ENCODE measurements at regions of chr7 and their contacts with region 1.

Region 1: GRCh38 chr7:26365077-26365900 is 73.6 kb downstream of the SNX10 start:
- DNase-seq: peak; percentile 83
- ATAC-seq: peak; percentile 96
- H3K4me3 ChIP-seq: no peak overlapping the region
- H3K27ac ChIP-seq: peak overlapping the region; percentile 48; the same call in 1 of the 2 replicates
- H3K4me1 ChIP-seq: peaks cover 11% of the 10 kb centered on the region
- H3K27me3 ChIP-seq: no peaks in the 10 kb centered on the region
- CTCF ChIP-seq: peak; percentile 62 to 94 (median 64); a peak in 5 of 6 replicates
- EP300 ChIP-seq: no peak
- POLR2A ChIP-seq: no peak
- RAD21 ChIP-seq: peak; percentile 98

Region 2: DNA sequence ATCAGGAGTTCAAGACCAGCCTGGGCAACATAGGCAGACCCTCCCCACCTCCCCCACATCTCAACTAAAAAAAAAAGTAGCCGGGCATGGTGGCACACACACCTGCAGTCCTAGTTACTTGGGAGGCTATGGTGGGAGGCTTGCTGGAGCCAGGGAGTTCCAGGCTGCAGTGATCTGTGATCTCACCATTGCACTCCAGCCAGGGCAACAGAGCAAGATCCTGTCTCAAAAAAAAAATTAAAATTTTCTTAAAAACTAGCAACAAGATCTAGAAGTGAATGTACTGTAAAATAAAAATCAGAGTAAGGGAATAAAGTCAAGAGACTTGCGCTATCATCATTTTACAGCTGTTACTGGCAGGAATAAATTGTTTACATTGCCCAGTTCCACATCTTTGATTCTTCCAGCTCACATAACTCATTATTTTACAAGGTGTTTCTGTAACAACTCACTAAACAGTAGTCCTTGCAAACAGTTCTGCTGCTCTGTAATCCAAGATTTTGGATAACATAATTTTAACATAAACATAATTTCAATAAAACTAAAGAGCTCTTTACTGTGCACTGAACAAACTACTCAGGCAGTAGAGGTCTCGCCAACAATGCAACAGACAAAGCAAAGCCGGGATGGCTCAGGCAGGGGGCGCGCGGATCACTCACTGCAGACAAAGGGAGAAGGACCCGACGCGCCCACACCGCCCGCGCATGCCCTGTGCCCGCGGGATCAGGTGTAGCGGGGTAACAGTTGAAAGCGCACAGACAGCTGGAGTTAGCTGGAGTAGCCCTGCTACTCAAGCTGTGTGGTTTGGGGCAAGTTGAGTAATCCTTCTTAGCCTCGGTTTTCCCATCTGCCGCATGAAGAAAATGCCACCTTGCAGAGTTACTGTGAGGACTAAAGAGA is 286.6 kb before region 1 on chr7:
- CTCF ChIA-PET with region 1: interaction called, 17 read pairs
- POLR2A ChIA-PET with region 1: no interaction called
- RAD21 ChIA-PET with region 1: interaction called, 5 read pairs
- SMC1A ChIA-PET with region 1: interaction called, 10 read pairs
- in situ Hi-C with region 1: no loop called
- intact Hi-C with region 1: loop called (anchors 5 kb)
- DNase-seq: peak; percentile 36
- ATAC-seq: peak; percentile 98
- H3K4me3 ChIP-seq: no peak overlapping the region
- H3K27ac ChIP-seq: no peak overlapping the region
- H3K4me1 ChIP-seq: no peaks in the 10 kb centered on the region
- H3K27me3 ChIP-seq: peaks cover 2 to 5% of the 10 kb centered on the region in 2 experiments; a peak in 1 of 4 replicates
- CTCF ChIP-seq: peak; percentile 50 to 61 (median 53); a peak in 5 of 6 replicates
- EP300 ChIP-seq: no peak
- POLR2A ChIP-seq: no peak
- RAD21 ChIP-seq: peak; percentile 60

Region 3: DNA sequence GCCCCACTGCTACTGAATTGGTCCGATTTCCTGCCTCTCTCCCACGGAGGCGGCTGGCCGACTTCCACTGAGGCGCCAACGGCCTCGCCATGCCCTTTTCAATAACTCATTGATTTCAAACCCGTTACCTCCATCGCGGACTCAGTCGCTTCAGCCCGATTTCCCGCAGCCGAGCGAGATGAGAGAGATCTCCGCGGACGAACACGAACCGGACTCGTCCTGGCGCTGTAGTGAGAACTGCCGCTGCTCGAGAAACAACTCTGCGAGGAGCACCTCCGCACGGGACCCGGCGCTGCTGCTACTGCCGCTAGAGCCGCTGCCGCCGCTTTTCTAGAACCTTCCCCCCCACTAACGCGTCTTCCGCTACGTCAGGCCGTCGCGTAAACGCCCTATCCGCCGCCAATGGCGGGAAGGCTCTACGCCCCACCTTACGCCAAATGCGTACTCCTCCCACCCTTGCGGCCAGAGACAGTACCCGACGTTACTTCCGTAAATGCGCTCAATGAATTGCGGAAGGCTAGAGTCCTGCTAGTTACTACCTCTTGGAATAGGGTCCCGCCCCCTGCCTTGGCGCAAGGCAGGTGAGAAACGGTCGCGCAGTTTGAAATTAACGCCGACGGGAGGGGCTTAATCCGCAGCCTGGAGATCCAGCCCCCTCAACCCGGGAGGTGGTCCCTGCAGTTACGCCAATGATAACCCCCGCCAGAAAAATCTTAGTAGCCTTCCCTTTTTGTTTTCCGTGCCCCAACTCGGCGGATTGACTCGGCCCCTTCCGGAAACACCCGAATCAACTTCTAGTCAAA is 164.6 kb before region 1 on chr7 and contains the start of gene HNRNPA2B1:
- CTCF ChIA-PET with region 1: interaction called, 24 read pairs
- POLR2A ChIA-PET with region 1: interaction called, 3 read pairs
- RAD21 ChIA-PET with region 1: interaction called, 15 read pairs
- SMC1A ChIA-PET with region 1: interaction called, 28 read pairs
- in situ Hi-C with region 1: loop called (anchors 10 kb)
- intact Hi-C with region 1: loop called (anchors 2 kb)
- DNase-seq: peak; percentile 98
- ATAC-seq: peak; percentile 75
- H3K4me3 ChIP-seq: peak within 1 kb of the TSS; percentile 98
- H3K27ac ChIP-seq: peak within 1 kb of the TSS; percentile 96
- H3K4me1 ChIP-seq: 0 out of 2 replicates have a peak, but pooled peaks cover 3% of the 10 kb centered on the region
- H3K27me3 ChIP-seq: no peaks in the 10 kb centered on the region
- CTCF ChIP-seq: no peak
- EP300 ChIP-seq: no peak
- POLR2A ChIP-seq: peak; percentile 100
- RAD21 ChIP-seq: no peak
- polyA plus RNA-seq, gene HNRNPA2B1: 726 to 1,124 TPM

Region 4: GRCh38 chr7:26318921-26319320 is 46.4 kb before region 1 on chr7:
- CTCF ChIA-PET with region 1: interaction called, 13 read pairs
- POLR2A ChIA-PET with region 1: no interaction called
- RAD21 ChIA-PET with region 1: interaction called, 4 read pairs
- SMC1A ChIA-PET with region 1: interaction called, 5 read pairs
- in situ Hi-C with region 1: no loop called
- intact Hi-C with region 1: no loop called
- DNase-seq: no peak
- ATAC-seq: no peak
- H3K4me3 ChIP-seq: no peak overlapping the region
- H3K27ac ChIP-seq: no peak overlapping the region
- H3K4me1 ChIP-seq: peaks cover under 1% of the 10 kb centered on the region; the same call in 1 of the 2 replicates
- H3K27me3 ChIP-seq: no peaks in the 10 kb centered on the region
- CTCF ChIP-seq: no peak; a peak in 1 of 6 replicates
- EP300 ChIP-seq: no peak
- POLR2A ChIP-seq: no peak
- RAD21 ChIP-seq: no peak

Region 5: DNA sequence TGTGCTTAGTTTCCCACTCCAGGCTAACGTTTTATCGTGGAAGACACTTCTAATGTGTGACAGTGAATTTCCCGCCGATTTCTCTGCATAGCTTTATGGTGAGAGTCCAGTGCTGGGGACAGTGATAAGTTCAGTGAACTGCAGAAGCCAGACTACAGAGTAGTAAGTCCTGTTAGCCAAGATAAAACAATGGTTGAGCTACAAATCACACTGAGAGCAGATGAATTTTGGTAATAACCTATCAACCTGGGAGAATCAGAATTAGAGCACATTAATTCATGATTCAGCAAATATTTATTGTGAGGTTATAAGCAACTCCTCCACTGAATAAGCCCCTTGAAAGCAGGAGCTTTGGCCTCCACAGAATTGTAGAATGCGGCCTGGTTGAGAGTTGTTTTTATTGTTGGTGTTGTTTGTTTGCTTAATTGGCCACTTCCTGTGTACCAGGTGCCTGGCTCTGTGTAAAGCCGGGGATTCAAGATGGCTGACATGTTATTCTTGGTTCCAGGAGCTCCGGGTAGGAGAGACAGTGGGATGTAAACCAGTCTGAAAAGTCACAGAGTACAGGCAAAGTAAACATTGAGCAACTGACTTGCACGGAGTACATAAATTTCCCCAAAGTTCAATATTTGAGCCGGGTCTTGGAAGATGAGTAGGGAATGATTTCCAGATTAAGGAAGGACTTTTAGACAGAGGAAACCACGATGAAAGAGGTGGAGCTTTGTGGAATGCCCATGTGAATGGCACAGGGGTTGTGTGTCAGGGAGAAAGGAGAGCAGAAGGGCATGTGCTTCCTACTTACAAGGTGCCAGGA is 39.1 kb after region 1 on chr7:
- CTCF ChIA-PET with region 1: interaction called, 13 read pairs
- POLR2A ChIA-PET with region 1: no interaction called
- RAD21 ChIA-PET with region 1: no interaction called
- SMC1A ChIA-PET with region 1: interaction called, 5 read pairs
- in situ Hi-C with region 1: no loop called
- intact Hi-C with region 1: no loop called
- DNase-seq: no peak
- ATAC-seq: no peak
- H3K4me3 ChIP-seq: no peak overlapping the region
- H3K27ac ChIP-seq: no peak overlapping the region
- H3K4me1 ChIP-seq: peaks cover 8% of the 10 kb centered on the region; the same call in 1 of the 2 replicates
- H3K27me3 ChIP-seq: no peaks in the 10 kb centered on the region
- CTCF ChIP-seq: no peak
- EP300 ChIP-seq: no peak
- POLR2A ChIP-seq: no peak
- RAD21 ChIP-seq: no peak

Region 6: DNA sequence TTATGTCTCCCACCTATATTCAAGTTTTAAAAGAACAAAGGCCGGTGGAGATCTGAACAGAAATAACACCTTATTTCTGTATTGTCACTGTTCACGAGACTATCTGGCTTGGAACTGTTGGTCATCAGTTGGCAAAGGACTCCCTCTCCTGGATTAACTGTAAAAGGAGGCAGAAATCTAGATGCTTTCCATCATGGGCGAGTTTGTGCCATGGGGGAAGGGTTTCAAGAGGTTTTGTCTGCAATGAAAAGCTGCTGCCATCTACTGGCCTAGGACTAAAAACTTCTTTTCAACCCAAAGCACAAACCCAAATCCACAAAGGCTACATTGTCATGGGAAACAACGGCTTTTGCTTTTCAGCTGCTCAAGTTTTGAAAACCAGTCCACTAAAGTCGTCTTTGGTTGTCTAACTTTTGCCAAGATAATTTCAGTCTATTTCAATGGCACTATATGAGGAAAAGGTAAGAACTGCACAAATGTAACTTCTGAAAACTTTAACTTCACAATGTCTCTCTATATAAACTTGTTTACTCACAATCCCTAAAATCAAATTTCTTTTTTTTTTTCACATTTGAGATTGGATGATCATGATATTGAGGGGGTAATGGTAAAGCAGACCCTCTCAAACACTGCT is 302.3 kb after region 1 on chr7:
- CTCF ChIA-PET with region 1: interaction called, 66 read pairs
- POLR2A ChIA-PET with region 1: no interaction called
- RAD21 ChIA-PET with region 1: interaction called, 13 read pairs
- SMC1A ChIA-PET with region 1: interaction called, 42 read pairs
- in situ Hi-C with region 1: loop called (anchors 5 kb)
- intact Hi-C with region 1: loop called (anchors 1 kb)
- DNase-seq: peak; percentile 36
- ATAC-seq: peak; percentile 82
- H3K4me3 ChIP-seq: no peak overlapping the region
- H3K27ac ChIP-seq: no peak overlapping the region
- H3K4me1 ChIP-seq: no peaks in the 10 kb centered on the region
- H3K27me3 ChIP-seq: no peaks in the 10 kb centered on the region
- CTCF ChIP-seq: peak; percentile 64 to 91 (median 80); a peak in 5 of 6 replicates
- EP300 ChIP-seq: no peak
- POLR2A ChIP-seq: no peak
- RAD21 ChIP-seq: peak; percentile 78